Heart right ventricle (tissue), 16 donors: ENCODE measurements at regions of chrX and their contacts with region 1.

Region 1: DNA sequence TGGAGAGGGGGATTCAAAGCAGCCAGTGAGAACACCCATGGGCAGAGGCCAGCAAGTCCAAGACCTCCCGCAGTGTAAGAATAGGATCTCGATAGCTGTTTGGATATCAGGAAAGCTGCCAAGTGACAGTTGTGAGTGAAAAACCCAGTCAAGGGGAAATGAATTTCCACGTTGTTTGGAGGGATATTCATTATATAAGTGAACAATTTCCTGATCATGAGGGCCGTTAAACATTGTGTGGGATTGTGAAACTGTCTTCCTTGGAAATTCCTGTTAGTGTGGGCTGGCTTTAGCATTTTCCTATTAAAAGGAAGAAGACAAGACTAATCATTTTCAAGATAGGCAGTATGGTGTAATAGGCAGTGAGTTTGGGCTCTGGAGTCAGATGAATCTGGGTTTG is 15.0 kb downstream of the CLDN2 start:
- DNase-seq: no peak
- ATAC-seq: no peak
- H3K4me3 ChIP-seq: no peak overlapping the region
- H3K27ac ChIP-seq: no peak overlapping the region
- H3K4me1 ChIP-seq: peaks cover 0 to 10% (median 0%) of the 10 kb centered on the region in 9 donors
- H3K27me3 ChIP-seq: peaks cover 0 to 14% (median 0%) of the 10 kb centered on the region in 7 donors
- CTCF ChIP-seq: no peak

Region 2: DNA sequence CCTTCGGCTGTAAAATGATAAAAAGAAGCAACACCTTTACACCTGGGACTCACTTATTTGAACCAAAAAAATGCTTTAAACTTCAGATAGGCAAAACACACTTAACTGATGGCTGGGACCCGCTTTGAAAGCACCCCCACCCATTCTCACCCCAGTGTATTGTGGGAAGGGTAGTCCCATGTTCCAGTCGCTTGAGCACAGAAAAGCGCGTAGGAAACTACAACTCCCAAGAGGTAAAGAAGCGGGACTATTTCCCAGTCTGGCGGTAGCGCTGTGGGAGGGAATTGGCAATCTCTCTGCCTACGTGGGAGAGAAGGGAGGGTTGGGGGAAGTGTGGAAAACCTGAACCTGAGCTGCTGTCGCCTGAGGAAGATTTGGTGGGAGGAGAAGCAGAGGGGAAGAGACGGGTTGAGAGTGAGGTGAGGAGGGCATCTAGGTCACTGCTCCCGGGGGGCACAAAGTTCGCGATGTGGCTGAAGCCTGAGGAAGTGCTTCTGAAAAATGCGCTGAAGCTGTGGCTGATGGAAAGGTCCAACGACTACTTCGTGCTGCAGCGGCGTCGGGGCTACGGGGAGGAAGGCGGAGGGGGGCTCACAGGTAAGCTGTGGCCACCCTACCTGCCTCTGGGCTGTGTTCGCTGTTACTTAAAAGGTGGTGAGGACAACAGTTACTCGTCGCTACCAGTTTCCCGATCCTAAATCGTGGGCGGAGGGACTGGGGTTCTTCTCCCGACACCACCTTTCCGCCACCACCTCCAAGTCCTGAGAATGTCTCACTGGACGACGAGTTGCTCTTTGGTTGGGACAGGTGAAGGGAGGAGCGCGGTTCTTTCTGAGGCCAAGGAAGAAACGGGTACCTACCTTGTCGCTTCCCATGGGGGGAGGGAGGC is 132.5 kb before region 1 on chrX and contains the start of gene TBC1D8B:
- intact Hi-C with region 1: no loop called
- DNase-seq: peak; percentile 57 to 85
- ATAC-seq: peak; percentile 99 to 100 (median 99)
- H3K4me3 ChIP-seq: peak within 1 kb of the TSS; percentile 46 to 72 (median 63)
- H3K27ac ChIP-seq: peak within 1 kb of the TSS in 5 of 10 donors; percentile 19 to 64 (median 45)
- H3K4me1 ChIP-seq: peaks cover 0 to 7% (median 0%) of the 10 kb centered on the region in 9 donors
- H3K27me3 ChIP-seq: peaks cover 0 to 64% (median 0%) of the 10 kb centered on the region in 7 donors
- CTCF ChIP-seq: no peak
- total RNA-seq, gene TBC1D8B: 0.87 to 3.4 (median 2.3) TPM

Region 3: DNA sequence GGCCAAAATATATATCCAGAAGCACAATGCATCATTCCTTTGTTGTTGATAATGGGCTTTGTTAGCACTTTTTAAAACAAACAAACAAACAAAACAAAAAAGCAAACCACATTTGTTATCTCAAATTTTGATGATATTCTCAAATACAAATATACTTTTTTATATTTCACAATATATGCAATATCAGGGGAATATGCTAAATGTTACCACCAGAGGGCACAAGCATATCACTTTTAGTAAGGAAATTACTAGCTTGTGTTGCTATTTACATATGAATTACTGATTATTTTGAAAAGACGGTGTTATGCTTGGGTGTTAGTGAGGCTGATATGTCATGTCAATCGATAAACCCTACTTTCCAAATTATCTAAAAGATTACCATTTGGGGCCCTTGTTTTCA is 61.1 kb before region 1 on chrX:
- intact Hi-C with region 1: no loop called
- DNase-seq: no peak
- ATAC-seq: no peak
- H3K4me3 ChIP-seq: no peak overlapping the region
- H3K27ac ChIP-seq: no peak overlapping the region
- H3K4me1 ChIP-seq: no peaks in the 10 kb centered on the region
- H3K27me3 ChIP-seq: peaks cover 0 to 47% (median 0%) of the 10 kb centered on the region in 7 donors
- CTCF ChIP-seq: peak in 6 of 9 donors; percentile 25 to 62 (median 31)

Region 4: DNA sequence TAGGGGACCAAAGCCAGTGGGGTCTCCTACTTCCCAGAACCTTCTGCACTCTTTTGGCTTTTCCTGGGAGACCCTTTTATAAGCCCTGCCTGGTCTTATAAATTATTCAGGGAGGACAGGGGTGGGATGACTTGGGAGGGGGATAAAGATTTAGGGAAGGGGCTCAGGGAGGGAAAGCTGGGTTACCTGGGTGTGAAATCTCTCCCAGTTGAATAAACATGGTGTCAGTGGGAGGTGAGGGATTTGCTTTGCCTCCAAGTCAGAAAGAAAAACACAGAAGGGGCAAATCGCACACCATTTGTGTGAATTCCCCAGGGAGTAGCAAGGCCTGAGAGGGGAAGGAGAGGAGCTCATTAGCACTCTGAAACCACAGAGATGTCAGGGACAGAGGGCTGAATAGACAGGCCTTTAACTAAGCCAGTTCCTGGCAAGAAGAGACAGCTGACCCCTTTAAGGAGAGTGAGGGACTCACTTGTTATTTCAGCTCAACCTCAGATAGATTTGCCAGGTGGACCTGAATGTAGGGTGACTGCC is 31.8 kb before region 1 on chrX and contains the start of gene RIPPLY1:
- intact Hi-C with region 1: loop called in 1 of 10 experiments (anchors 5 kb)
- DNase-seq: no peak
- ATAC-seq: no peak
- H3K4me3 ChIP-seq: no peak within 1 kb of the TSS
- H3K27ac ChIP-seq: no peak within 1 kb of the TSS
- H3K4me1 ChIP-seq: no peaks in the 10 kb centered on the region
- H3K27me3 ChIP-seq: peaks cover 0 to 15% (median 0%) of the 10 kb centered on the region in 7 donors
- CTCF ChIP-seq: no peak
- total RNA-seq, gene RIPPLY1: not detected

Region 5: DNA sequence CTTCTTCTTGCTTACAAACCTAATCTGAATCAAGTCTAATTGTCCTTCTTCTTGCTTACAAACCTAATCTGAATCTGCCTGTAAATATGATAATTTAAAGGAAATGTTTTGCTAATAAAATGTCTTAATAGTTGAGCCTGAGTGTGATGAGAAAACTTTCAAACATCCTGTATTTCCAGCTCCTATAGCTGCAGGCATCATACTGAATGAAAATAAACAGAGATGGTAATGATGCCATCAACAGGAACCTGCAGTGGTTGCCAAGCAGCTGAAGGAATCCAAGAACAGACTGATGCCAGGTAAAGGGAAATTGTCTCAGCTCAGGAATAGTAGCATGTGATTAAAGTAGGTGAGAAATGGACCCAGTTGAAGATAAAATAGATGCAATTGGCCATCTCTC is 1957.3 kb after region 1 on chrX:
- intact Hi-C with region 1: loop called in 1 of 10 experiments (anchors 5 kb)
- DNase-seq: no peak
- ATAC-seq: no peak
- H3K4me3 ChIP-seq: no peak overlapping the region
- H3K27ac ChIP-seq: no peak overlapping the region
- H3K4me1 ChIP-seq: no peaks in the 10 kb centered on the region
- H3K27me3 ChIP-seq: peaks cover 0 to 9% (median 0%) of the 10 kb centered on the region in 7 donors
- CTCF ChIP-seq: no peak